BJ (cell line): ENCODE measurements at regions of chr11 and their contacts with region 1.

Region 1: DNA sequence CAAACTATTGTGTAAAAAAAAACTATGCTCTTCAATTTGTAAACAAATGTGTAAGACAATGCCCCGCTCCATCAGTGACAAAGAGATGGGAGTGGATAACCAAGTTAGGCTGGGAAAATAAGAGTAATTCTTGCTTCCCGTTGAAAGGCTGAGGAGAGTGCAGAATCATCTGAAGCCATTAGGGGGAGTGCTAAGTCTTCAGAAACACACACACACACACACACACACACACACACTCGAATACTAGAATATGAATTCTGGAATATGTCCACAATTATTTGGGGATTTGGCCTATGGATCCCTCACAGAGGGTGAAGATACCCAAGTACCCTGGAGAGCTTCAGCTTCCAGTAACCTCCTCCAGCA is 27.8 kb upstream of the ROBO3 start:
- DNase-seq: peak; percentile 31
- H3K4me3 ChIP-seq: no peak overlapping the region
- H3K27me3 ChIP-seq: peaks cover 34% of the 10 kb centered on the region
- CTCF ChIP-seq: peak; percentile 76

Region 2: DNA sequence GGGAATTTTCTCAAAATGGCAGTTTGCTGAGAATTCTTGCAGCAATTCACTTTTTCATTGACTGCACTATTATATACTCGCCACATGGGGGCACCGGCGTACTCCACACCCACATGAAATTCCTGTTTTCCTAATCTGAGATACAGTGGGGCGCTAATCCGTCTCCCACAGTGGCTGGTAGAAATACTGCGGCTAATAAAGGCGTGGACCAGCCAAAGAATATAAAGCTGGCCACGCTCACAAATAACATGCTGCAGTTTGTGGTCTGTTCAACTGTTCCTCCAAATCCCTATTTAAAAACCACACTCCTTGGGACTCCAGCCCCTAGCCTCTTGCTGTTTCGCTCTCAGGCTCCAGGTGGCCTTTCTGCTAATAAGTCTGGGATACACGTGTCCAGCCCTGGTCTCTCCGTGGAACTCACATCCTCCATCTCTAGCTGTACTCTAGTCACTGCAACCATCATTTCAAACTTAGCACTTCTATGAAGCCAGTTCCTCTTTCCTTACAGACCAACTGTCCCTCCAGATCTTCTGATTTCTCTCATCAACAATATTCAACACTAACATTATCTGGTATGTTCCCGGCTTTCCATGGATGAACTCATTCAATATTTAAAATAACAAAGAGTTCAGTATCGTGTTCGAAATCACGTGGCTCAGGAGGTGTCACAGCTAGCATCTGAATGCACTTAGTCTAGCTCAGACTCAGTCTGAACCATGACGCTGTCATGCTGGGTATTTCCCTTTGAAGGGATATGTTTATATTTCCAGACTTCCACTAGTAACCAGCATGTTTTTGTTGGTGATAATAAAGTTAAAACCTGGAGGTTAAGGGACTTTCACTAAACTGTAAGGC is 192.8 kb before region 1 on chr11:
- CTCF ChIA-PET with region 1: interaction called, 18 read pairs
- POLR2A ChIA-PET with region 1: no interaction called
- DNase-seq: no peak
- H3K4me3 ChIP-seq: no peak overlapping the region
- H3K27me3 ChIP-seq: no peaks in the 10 kb centered on the region
- CTCF ChIP-seq: peak; percentile 82

Region 3: GRCh38 chr11:124758317-124759203 is 78.9 kb before region 1 on chr11:
- CTCF ChIA-PET with region 1: interaction called, 14 read pairs
- POLR2A ChIA-PET with region 1: no interaction called
- DNase-seq: no peak
- H3K4me3 ChIP-seq: peak overlapping the region; percentile 33
- H3K27me3 ChIP-seq: peaks cover 23% of the 10 kb centered on the region
- CTCF ChIP-seq: peak; percentile 82

Region 4: GRCh38 chr11:124812876-124813275 is 24.6 kb before region 1 on chr11:
- CTCF ChIA-PET with region 1: interaction called, 17 read pairs
- POLR2A ChIA-PET with region 1: no interaction called
- DNase-seq: no peak
- H3K4me3 ChIP-seq: no peak overlapping the region
- H3K27me3 ChIP-seq: peaks cover 3% of the 10 kb centered on the region; the same call in 1 of the 2 replicates
- CTCF ChIP-seq: no peak

Region 5: GRCh38 chr11:124865921-124866583 is 28.6 kb after region 1 on chr11:
- CTCF ChIA-PET with region 1: interaction called, 31 read pairs
- POLR2A ChIA-PET with region 1: no interaction called
- DNase-seq: no peak
- H3K4me3 ChIP-seq: peak overlapping the region; percentile 6; the same call in 1 of the 2 replicates
- H3K27me3 ChIP-seq: peaks cover 82% of the 10 kb centered on the region
- CTCF ChIP-seq: peak; percentile 70